CD8-positive, alpha-beta memory T cell (primary cell): ENCODE measurements at regions of chr1 and their contacts with region 1.

Region 1: DNA sequence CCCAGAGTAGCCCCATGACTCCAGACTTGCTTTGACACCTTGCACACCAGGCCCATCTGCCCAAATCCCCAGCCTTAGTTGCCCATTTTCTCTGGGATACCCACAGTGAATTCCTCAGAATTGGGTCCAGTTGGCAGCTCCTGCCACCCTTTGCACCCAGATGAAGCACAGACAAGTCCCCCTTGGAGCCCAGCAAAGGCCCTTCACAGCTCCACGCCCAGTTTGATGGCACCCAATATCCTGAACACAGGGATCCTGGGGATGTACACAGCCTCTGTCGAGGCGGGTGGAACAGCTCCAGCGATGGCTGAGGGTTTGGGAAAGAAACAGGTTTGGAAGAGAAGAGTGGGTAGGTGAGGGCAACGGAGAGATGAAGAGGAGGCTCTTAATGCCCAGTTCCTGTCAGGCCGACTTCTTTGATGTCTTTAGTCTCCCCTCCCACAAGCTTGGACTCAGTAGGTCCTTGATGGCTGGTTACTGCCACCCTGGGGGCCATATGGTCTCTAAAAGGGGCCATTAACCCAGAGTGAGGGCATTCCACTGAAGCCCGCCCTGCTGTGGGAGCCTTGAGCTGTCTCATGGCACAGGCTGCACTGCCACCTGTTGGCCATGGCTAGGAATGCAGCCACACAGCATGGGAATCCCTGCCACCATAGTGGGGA is 21.7 kb downstream of the TMEM53 start:
- DNase-seq: peak; percentile 51 to 83 (median 67)
- H3K4me3 ChIP-seq: no peak overlapping the region
- H3K4me3 Mint-ChIP-seq: no peak overlapping the region
- H3K27ac ChIP-seq: no peak overlapping the region
- H3K27ac Mint-ChIP-seq: peak overlapping the region in 5 of 8 donors; percentile 44 to 68 (median 50)
- H3K4me1 ChIP-seq: no peaks in the 10 kb centered on the region
- H3K4me1 Mint-ChIP-seq: peaks cover 0 to 1% (median 0%) of the 10 kb centered on the region in 3 donors
- H3K27me3 ChIP-seq: no peaks in the 10 kb centered on the region
- H3K27me3 Mint-ChIP-seq: no peaks in the 10 kb centered on the region

Region 2: DNA sequence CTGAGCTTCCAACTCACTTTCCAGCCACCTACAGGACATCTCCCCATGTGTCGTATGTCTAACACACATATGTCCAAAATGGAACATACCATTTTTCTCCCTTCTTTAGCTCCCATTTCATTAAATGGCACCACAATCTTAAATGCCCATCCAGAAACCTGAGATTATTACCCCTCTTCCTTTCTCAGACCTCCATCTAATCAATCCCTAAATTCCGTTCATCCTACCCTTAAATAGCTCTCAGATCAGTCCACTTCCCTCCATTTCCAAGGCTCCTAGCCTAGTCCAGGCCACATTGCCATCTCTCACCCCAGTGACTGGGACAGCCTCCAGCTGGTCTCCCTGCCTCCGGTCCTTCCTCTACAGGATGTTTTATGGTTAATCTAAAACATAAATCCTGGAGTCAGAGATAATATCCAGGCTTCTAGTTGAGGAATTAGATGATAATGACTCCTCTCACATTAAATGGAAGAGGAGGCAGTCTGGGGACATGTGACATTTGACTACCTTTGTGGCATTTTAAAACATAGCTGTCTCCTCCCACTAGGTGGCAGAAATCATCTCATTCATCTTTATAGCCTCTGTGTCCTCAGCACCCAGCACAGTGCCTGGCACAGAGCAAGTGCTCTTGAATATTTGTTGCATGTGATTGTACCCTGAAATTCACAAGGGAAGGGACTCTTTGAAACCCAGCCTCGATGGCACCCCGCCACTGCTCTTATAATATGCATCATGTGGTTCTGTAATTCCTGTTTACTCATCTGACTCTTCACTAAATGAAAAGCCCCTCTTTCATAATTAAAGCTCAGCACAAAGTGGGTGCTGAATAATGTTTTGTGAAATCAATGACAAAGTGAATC is 80.6 kb before region 1 on chr1:
- CTCF ChIA-PET with region 1: interaction called, 52 read pairs
- POLR2A ChIA-PET with region 1: no interaction called
- DNase-seq: peak in 2 of 5 donors; percentile 11 to 22
- H3K4me3 ChIP-seq: no peak overlapping the region
- H3K4me3 Mint-ChIP-seq: no peak overlapping the region
- H3K27ac ChIP-seq: no peak overlapping the region
- H3K27ac Mint-ChIP-seq: no peak overlapping the region
- H3K4me1 ChIP-seq: no peaks in the 10 kb centered on the region
- H3K4me1 Mint-ChIP-seq: no peaks in the 10 kb centered on the region
- H3K27me3 ChIP-seq: no peaks in the 10 kb centered on the region
- H3K27me3 Mint-ChIP-seq: peaks cover 6 to 22% of the 10 kb centered on the region in 2 donors

Region 3: GRCh38 chr1:44609412-44609767 is 43.2 kb before region 1 on chr1:
- CTCF ChIA-PET with region 1: interaction called, 42 read pairs
- POLR2A ChIA-PET with region 1: no interaction called
- DNase-seq: peak in 4 of 5 donors; percentile 4 to 56 (median 24)
- H3K4me3 ChIP-seq: no peak overlapping the region
- H3K4me3 Mint-ChIP-seq: no peak overlapping the region
- H3K27ac ChIP-seq: no peak overlapping the region
- H3K27ac Mint-ChIP-seq: no peak overlapping the region
- H3K4me1 ChIP-seq: no peaks in the 10 kb centered on the region
- H3K4me1 Mint-ChIP-seq: no peaks in the 10 kb centered on the region
- H3K27me3 ChIP-seq: no peaks in the 10 kb centered on the region
- H3K27me3 Mint-ChIP-seq: peaks cover 6 to 13% of the 10 kb centered on the region in 2 donors

Region 4: GRCh38 chr1:44636688-44637598 is 15.6 kb before region 1 on chr1:
- CTCF ChIA-PET with region 1: interaction called, 43 read pairs
- POLR2A ChIA-PET with region 1: interaction called, 5 read pairs
- DNase-seq: no peak
- H3K4me3 ChIP-seq: no peak overlapping the region
- H3K4me3 Mint-ChIP-seq: peak overlapping the region in 1 of 7 donors; percentile 13
- H3K27ac ChIP-seq: no peak overlapping the region
- H3K27ac Mint-ChIP-seq: peak overlapping the region in 1 of 8 donors; percentile 18
- H3K4me1 ChIP-seq: peaks cover 22% of the 10 kb centered on the region
- H3K4me1 Mint-ChIP-seq: peaks cover 34 to 49% (median 42%) of the 10 kb centered on the region in 3 donors
- H3K27me3 ChIP-seq: no peaks in the 10 kb centered on the region
- H3K27me3 Mint-ChIP-seq: peaks cover 0 to 2% of the 10 kb centered on the region in 2 donors

Region 5: GRCh38 chr1:44674113-44675000 is 21.8 kb after region 1 on chr1 and contains the starts of genes ARMH1 and TMEM53:
- CTCF ChIA-PET with region 1: interaction called, 33 read pairs
- POLR2A ChIA-PET with region 1: interaction called, 5 read pairs
- DNase-seq: peak; percentile 95 to 97 (median 96)
- H3K4me3 ChIP-seq: peak within 1 kb of the TSS; percentile 90
- H3K4me3 Mint-ChIP-seq: peak within 1 kb of the TSS; percentile 83 to 96 (median 90)
- H3K27ac ChIP-seq: peak within 1 kb of the TSS; percentile 93
- H3K27ac Mint-ChIP-seq: peak within 1 kb of the TSS; percentile 82 to 98 (median 92)
- H3K4me1 ChIP-seq: peaks cover 13% of the 10 kb centered on the region
- H3K4me1 Mint-ChIP-seq: peaks cover 17 to 26% (median 25%) of the 10 kb centered on the region in 3 donors
- H3K27me3 ChIP-seq: no peaks in the 10 kb centered on the region
- H3K27me3 Mint-ChIP-seq: no peaks in the 10 kb centered on the region
- total RNA-seq, gene ARMH1: 33.3 to 38.0 TPM
- total RNA-seq, gene TMEM53: 2.3 to 2.5 TPM